ENCODE measurements at regions of chr21 and their contacts with region 1.

Region 1: DNA sequence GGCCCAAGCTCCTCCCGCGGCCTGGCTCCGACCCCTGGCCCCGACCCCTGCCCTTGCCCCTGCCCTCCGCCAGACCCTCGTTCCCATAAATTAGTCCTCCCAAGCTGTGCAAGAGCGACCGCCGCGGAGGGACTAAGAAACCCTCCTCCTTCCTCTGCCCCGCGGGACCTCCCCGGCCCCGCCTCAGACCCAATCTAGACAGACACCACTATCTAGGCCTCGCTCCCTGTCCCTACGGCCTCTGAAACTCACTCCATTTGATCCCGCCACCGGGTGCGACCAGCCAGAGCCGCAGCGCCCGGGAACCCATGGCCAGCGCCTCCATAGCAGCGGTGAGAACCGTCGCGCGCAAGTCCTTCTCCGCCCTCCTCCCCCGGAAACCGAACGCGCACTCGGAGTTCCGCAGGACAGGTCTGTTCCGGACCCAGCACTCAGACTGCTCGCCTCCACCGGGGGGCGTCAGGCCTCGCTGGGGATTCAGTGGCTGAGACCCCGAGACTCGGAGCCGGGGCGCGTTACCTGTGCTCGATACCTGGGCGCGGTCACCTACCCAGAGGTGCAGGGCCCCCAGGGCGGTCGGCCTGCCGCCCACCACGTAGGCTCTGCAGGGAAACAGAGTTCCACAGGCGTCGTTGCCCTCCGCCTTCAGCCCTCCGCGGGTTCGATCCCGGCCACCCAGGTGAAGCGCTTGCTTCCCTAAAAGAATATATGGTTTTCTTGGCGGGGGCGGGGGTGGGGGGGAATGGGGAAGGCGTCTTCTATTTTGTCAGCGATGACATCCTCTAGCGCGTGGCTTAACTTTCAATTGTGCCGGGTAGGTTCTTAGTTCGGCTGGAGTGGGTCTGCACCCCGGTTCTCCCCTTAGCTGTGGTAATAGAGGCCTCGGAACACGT is at the start of gene MRPL39:
- DNase-seq: peak; percentile 74 to 88 (median 82)
- ATAC-seq: peak; percentile 93
- H3K4me3 ChIP-seq: peak within 1 kb of the TSS; percentile 90
- H3K4me3 Mint-ChIP-seq: peak within 1 kb of the TSS; percentile 89 to 100 (median 100)
- H3K27ac ChIP-seq: peak within 1 kb of the TSS; percentile 76
- H3K27ac Mint-ChIP-seq: peak within 1 kb of the TSS; percentile 91 to 100 (median 99)
- H3K4me1 ChIP-seq: peaks cover 17 to 21% of the 10 kb centered on the region in 2 donors
- H3K4me1 Mint-ChIP-seq: peaks cover 18 to 53% (median 47%) of the 10 kb centered on the region in 7 donors
- H3K27me3 ChIP-seq: no peaks in the 10 kb centered on the region
- H3K27me3 Mint-ChIP-seq: peaks cover 0 to 2% (median 0%) of the 10 kb centered on the region in 5 donors
- total RNA-seq, gene MRPL39: 7.6 to 35.7 (median 19.5) TPM

Region 2: DNA sequence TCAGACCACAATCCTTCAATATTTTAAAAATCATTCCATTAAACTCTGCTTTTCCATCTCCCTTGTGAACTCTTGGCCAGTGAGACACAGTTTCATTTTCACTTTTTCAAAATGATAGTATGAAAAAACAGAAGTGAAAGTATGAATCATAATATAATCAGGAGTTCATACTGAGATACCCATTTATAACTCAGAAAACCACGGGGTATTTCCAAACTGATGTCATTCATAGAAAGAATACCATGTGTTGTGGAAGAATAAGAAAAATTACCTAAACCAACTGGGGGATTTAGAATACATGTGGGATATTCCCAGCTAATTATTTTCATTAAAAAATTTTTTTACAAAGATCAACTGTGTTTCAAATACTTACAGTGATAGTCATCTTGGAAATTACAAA is 150.0 kb before region 1 on chr21:
- CTCF ChIA-PET with region 1: no interaction called
- POLR2A ChIA-PET with region 1: no interaction called
- intact Hi-C with region 1: loop called in 1 of 2 experiments (anchors 1 kb)
- DNase-seq: peak in 6 of 9 donors; percentile 11 to 49 (median 34)
- ATAC-seq: peak; percentile 95
- H3K4me3 ChIP-seq: peak overlapping the region; percentile 1
- H3K4me3 Mint-ChIP-seq: peak overlapping the region; percentile 65 to 91 (median 82)
- H3K27ac ChIP-seq: peak overlapping the region; percentile 40
- H3K27ac Mint-ChIP-seq: peak overlapping the region; percentile 81 to 91 (median 86)
- H3K4me1 ChIP-seq: peaks cover 0 to 5% of the 10 kb centered on the region in 2 donors
- H3K4me1 Mint-ChIP-seq: peaks cover 5 to 39% (median 24%) of the 10 kb centered on the region in 7 donors
- H3K27me3 ChIP-seq: no peaks in the 10 kb centered on the region
- H3K27me3 Mint-ChIP-seq: no peaks in the 10 kb centered on the region

Region 3: DNA sequence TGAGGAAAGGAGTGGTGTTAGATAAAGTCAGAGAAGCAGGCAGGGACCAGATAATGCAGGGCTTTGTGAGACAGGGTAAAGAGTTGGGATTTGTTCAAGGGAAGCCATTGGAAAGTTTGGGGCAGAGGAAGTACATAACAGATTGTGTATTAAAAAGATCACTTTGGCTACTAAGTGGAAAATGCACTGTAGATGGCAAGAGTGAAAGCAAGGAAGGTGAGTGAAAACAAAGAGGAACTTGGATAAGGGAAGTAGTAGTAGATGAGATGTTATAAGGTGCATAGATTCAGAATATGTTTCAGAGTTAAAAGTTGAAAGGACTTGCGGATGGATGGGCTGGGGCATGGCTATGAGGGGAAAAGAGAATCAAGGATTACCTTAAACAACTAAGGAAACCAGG is 17.5 kb before region 1 on chr21:
- CTCF ChIA-PET with region 1: interaction called, 4 read pairs
- POLR2A ChIA-PET with region 1: no interaction called
- intact Hi-C with region 1: loop called in 1 of 2 experiments (anchors 2 kb)
- DNase-seq: no peak
- ATAC-seq: no peak
- H3K4me3 ChIP-seq: no peak overlapping the region
- H3K4me3 Mint-ChIP-seq: no peak overlapping the region
- H3K27ac ChIP-seq: no peak overlapping the region
- H3K27ac Mint-ChIP-seq: peak overlapping the region in 5 of 9 donors; percentile 1 to 66 (median 56)
- H3K4me1 ChIP-seq: no peaks in the 10 kb centered on the region
- H3K4me1 Mint-ChIP-seq: peaks cover 5 to 43% (median 36%) of the 10 kb centered on the region in 7 donors
- H3K27me3 ChIP-seq: no peaks in the 10 kb centered on the region
- H3K27me3 Mint-ChIP-seq: no peaks in the 10 kb centered on the region

Region 4: DNA sequence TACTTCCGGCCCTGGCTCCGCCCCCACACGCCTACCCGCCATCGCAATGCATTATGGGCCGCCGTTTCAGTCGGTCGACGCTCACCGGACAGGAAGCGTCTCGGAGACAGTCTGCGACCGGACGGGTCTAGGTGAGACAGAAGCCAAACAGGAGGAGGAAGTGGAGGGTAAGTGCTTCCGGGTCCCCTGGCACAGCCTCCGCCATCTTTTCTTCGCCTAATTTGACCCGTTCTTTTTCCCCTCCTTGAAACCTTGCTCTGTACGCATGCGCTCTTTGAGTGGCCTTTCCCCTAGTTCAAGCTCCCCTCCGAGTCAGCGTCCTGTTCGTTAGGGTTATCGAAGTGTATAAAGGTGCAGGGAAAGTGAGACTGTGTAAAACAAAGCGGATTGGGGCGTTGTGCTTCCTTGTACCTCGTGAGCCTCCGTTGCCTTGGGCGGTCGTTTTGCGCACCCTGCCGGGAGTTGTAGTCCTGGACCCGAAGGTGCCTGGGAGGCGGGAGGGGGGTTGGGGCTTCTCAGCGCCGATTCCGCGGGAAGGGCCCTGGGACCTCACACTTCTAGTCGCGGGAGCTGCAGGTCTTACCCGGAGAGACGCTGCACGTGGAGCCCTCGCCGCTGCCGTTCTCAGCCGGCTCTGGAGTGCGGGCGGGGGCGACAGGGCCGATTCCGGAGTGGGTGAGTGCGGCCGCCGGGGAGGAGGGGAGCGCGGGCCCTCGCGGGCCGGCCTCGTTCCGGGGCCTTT is 127.7 kb after region 1 on chr21 and contains the starts of genes ATP5PF and GABPA:
- CTCF ChIA-PET with region 1: interaction called, 6 read pairs
- POLR2A ChIA-PET with region 1: interaction called, 17 read pairs
- intact Hi-C with region 1: loop called (anchors 1 kb)
- DNase-seq: peak; percentile 95 to 99 (median 97)
- ATAC-seq: peak; percentile 96
- H3K4me3 ChIP-seq: peak within 1 kb of the TSS; percentile 96
- H3K4me3 Mint-ChIP-seq: peak within 1 kb of the TSS; percentile 98 to 100 (median 100)
- H3K27ac ChIP-seq: peak within 1 kb of the TSS; percentile 88
- H3K27ac Mint-ChIP-seq: peak within 1 kb of the TSS; percentile 98 to 100 (median 100)
- H3K4me1 ChIP-seq: peaks cover 0 to 13% of the 10 kb centered on the region in 2 donors
- H3K4me1 Mint-ChIP-seq: peaks cover 35 to 78% (median 64%) of the 10 kb centered on the region in 7 donors
- H3K27me3 ChIP-seq: no peaks in the 10 kb centered on the region
- H3K27me3 Mint-ChIP-seq: peaks cover 0 to 4% (median 0%) of the 10 kb centered on the region in 5 donors
- total RNA-seq, gene ATP5PF: 39.5 to 124 (median 58.6) TPM
- total RNA-seq, gene GABPA: 23.1 to 31.9 (median 29.4) TPM

Region 5: GRCh38 chr21:25750085-25750484 is 142.7 kb after region 1 on chr21:
- CTCF ChIA-PET with region 1: no interaction called
- POLR2A ChIA-PET with region 1: no interaction called
- intact Hi-C with region 1: no loop called
- DNase-seq: peak in 2 of 9 donors; percentile 8 to 11
- ATAC-seq: peak; percentile 18
- H3K4me3 ChIP-seq: no peak overlapping the region
- H3K4me3 Mint-ChIP-seq: peak overlapping the region in 7 of 10 donors; percentile 34 to 71 (median 42)
- H3K27ac ChIP-seq: no peak overlapping the region
- H3K27ac Mint-ChIP-seq: peak overlapping the region; percentile 37 to 94 (median 84)
- H3K4me1 ChIP-seq: no peaks in the 10 kb centered on the region
- H3K4me1 Mint-ChIP-seq: peaks cover 7 to 29% (median 13%) of the 10 kb centered on the region in 7 donors
- H3K27me3 ChIP-seq: no peaks in the 10 kb centered on the region
- H3K27me3 Mint-ChIP-seq: no peaks in the 10 kb centered on the region

Region 6: DNA sequence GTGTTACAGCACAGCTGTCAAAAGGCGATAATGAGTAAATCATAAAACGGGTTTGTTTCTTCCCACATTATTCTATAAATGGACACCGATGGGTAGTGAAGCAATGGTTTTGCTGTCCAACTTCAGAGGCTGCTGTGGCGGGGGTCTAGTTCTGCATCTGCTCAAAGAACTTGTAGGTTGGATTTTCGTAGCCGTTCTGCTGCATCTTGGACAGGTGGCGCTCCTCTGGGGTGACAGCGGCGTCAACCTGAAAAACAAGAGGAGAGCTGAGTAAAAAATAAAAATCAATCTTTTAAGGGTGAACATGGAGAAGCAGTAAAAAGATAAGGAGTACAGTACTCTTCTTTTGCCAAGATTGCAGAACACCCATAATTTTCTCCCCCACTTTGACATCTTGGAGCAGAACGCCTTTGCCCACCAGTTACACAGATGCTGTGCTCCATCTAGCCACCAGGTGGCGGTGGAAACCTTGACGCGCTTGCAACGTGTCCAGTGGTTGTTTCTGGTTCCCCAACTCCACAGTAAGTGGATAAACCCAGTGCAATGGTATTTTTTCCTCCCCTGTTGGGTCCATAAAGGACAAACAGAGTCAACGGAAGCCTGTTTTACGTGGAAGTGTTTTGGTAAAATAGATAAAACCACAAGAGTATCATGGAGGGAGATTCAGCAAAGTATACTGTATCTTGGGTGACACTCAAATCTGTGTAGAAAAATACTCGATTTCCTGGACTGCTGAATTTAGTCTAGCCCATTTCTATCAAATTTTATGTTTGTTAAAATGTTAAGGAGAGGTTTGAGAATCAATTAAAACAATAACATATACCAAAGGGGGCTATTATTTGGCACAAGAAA is 274.4 kb after region 1 on chr21:
- CTCF ChIA-PET with region 1: interaction called, 3 read pairs
- POLR2A ChIA-PET with region 1: no interaction called
- intact Hi-C with region 1: loop called (anchors 5 kb)
- DNase-seq: peak; percentile 27 to 66 (median 54)
- ATAC-seq: peak; percentile 81
- H3K4me3 ChIP-seq: no peak overlapping the region
- H3K4me3 Mint-ChIP-seq: no peak overlapping the region
- H3K27ac ChIP-seq: no peak overlapping the region
- H3K27ac Mint-ChIP-seq: no peak overlapping the region
- H3K4me1 ChIP-seq: no peaks in the 10 kb centered on the region
- H3K4me1 Mint-ChIP-seq: peaks cover 0 to 2% (median 0%) of the 10 kb centered on the region in 7 donors
- H3K27me3 ChIP-seq: no peaks in the 10 kb centered on the region
- H3K27me3 Mint-ChIP-seq: peaks cover 0 to 3% (median 0%) of the 10 kb centered on the region in 5 donors

Measured in naive thymus-derived CD4-positive, alpha-beta T cell (primary cell).